CD4-positive, alpha-beta memory T cell (primary cell): ENCODE measurements at regions of chr19 and their contacts with region 1.

Region 1: DNA sequence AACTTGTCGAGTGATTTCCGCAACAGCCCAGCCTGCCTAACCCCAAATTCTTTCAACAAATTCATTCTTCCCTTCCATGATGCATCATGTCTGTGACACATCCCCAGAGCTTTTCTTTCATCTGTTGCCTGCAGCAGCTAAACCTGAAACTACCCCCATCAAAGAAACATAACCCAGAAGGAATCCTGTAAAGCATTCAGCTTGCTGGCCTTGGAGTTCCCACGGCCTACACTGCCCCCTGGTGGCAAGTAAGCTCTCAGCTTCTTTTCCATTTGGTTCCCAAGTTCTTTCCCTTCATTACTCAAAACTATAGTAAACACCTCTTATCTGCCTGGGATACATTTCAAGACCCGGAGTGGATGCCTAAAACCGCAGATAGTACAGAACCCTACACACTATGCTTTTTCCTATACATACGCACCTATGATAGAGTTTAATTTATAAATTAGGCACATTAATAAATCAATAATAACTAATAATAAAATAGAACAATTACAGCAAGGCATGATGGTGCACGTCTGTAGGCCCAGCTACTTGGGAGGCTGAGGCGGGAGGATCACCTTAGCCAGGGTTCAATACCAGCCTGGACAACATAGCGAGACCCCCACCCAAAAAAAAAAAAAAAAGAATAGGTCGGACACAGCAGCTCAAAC is 7.4 kb downstream of the ETHE1 start:
- DNase-seq: peak; percentile 75 to 79 (median 78)
- H3K4me3 ChIP-seq: no peak overlapping the region
- H3K4me3 Mint-ChIP-seq: peak overlapping the region in 3 of 8 donors; percentile 2 to 13 (median 9)
- H3K27ac ChIP-seq: no peak overlapping the region
- H3K27ac Mint-ChIP-seq: peak overlapping the region in 6 of 7 donors; percentile 14 to 82 (median 41)
- H3K4me1 ChIP-seq: peaks cover 11% of the 10 kb centered on the region
- H3K4me1 Mint-ChIP-seq: peaks cover 13 to 14% (median 13%) of the 10 kb centered on the region in 4 donors
- H3K27me3 ChIP-seq: no peaks in the 10 kb centered on the region
- H3K27me3 Mint-ChIP-seq: no peaks in the 10 kb centered on the region

Region 2: DNA sequence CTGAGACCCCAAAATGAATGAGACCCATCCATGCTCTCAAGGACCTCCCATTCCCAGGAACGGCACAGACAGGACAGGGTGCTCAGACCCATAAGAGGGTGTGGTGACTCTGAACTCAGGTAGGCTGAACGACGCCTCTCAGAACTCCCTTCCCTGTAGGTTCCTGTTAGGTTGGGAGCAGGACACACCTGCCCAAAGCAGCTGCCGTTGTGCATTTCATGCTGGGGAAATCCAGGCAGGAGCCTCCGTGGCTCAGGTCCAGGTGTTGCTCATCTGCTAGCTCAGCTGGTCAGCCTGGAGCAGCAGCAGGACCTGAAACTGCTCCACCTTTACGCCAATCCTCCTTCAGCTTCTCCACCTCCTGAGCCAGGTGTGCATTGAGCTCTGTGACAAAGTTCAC is 124.0 kb before region 1 on chr19:
- CTCF ChIA-PET with region 1: no interaction called
- POLR2A ChIA-PET with region 1: no interaction called
- intact Hi-C with region 1: no loop called
- DNase-seq: no peak
- H3K4me3 ChIP-seq: no peak overlapping the region
- H3K4me3 Mint-ChIP-seq: no peak overlapping the region
- H3K27ac ChIP-seq: no peak overlapping the region
- H3K27ac Mint-ChIP-seq: no peak overlapping the region
- H3K4me1 ChIP-seq: no peaks in the 10 kb centered on the region
- H3K4me1 Mint-ChIP-seq: no peaks in the 10 kb centered on the region
- H3K27me3 ChIP-seq: no peaks in the 10 kb centered on the region
- H3K27me3 Mint-ChIP-seq: peaks cover 23 to 39% of the 10 kb centered on the region in 2 donors

Region 3: GRCh38 chr19:43425567-43426392 is 93.8 kb before region 1 on chr19:
- CTCF ChIA-PET with region 1: interaction called, 835 read pairs
- POLR2A ChIA-PET with region 1: no interaction called
- intact Hi-C with region 1: no loop called
- DNase-seq: peak in 1 of 5 donors; percentile 13
- H3K4me3 ChIP-seq: no peak overlapping the region
- H3K4me3 Mint-ChIP-seq: no peak overlapping the region
- H3K27ac ChIP-seq: no peak overlapping the region
- H3K27ac Mint-ChIP-seq: peak overlapping the region in 3 of 7 donors; percentile 17 to 85 (median 52)
- H3K4me1 ChIP-seq: peaks cover 18% of the 10 kb centered on the region
- H3K4me1 Mint-ChIP-seq: peaks cover 5 to 21% (median 10%) of the 10 kb centered on the region in 4 donors
- H3K27me3 ChIP-seq: no peaks in the 10 kb centered on the region
- H3K27me3 Mint-ChIP-seq: peaks cover 0 to 2% of the 10 kb centered on the region in 2 donors

Region 4: DNA sequence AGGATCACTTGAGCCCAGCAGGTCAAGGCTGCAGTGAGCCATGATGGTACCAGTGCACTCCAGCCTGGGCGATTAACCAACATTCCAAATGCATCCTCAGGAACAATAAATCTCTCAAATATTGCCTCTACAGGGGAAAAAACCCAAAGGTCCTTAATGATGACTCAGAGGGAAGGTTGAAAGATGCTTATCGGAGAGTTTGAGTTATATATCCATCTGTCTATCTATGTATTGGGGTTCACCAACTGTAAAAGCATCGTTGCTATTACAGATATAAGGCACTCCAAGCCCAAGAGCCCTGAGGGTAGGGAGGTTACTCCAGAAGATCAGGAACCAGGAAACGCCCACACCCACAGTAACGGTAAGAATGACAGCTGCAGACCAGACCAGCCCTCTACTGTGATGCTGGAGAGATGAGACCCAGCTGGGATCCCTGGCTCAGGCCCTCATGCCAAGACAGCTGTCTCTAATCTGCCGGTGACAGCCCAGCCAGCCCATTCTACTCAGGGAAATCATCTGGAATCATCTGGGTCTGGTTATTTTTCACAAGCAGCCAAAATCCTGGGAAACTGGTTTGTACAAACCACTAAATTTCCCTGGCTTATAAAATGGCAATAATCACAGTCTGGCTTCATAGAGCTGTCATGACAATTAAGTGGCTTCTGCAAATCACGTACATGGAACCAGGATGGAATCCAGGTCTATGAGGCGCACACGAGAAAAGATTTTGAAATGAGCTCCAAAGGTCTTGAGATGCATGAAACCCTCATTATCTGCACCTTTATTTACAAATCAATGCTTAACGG is 81.1 kb before region 1 on chr19:
- CTCF ChIA-PET with region 1: interaction called, 835 read pairs
- POLR2A ChIA-PET with region 1: interaction called, 29 read pairs
- intact Hi-C with region 1: loop called (anchors 1 kb)
- DNase-seq: peak in 2 of 5 donors; percentile 12 to 50
- H3K4me3 ChIP-seq: peak overlapping the region in 1 of 2 donors; percentile 38
- H3K4me3 Mint-ChIP-seq: peak overlapping the region in 6 of 8 donors; percentile 13 to 61 (median 52)
- H3K27ac ChIP-seq: peak overlapping the region; percentile 75
- H3K27ac Mint-ChIP-seq: peak overlapping the region; percentile 95 to 98 (median 96)
- H3K4me1 ChIP-seq: peaks cover 44% of the 10 kb centered on the region
- H3K4me1 Mint-ChIP-seq: peaks cover 35 to 66% (median 47%) of the 10 kb centered on the region in 4 donors
- H3K27me3 ChIP-seq: no peaks in the 10 kb centered on the region
- H3K27me3 Mint-ChIP-seq: no peaks in the 10 kb centered on the region

Region 5: DNA sequence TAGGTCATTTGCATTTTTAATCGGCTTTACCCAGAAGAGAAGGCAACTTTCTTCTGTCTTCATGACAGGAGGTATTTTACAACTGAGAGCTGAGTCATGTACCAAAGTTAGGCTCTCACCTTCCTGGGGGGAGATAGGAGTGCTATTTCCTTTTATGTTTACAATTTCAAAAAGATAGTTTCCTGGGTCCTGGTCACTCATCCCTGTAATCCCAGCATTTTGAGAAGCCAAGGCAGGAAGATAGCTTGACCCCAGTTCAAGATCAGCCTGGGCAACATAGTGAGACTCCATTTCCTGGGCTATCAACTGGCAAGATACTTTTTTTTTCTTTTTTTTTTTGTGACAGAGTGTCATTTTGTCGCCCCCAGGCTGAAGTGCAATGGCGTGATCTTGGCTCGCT is 61.8 kb before region 1 on chr19:
- CTCF ChIA-PET with region 1: interaction called, 21 read pairs
- POLR2A ChIA-PET with region 1: interaction called, 33 read pairs
- intact Hi-C with region 1: no loop called
- DNase-seq: no peak
- H3K4me3 ChIP-seq: no peak overlapping the region
- H3K4me3 Mint-ChIP-seq: no peak overlapping the region
- H3K27ac ChIP-seq: no peak overlapping the region
- H3K27ac Mint-ChIP-seq: no peak overlapping the region
- H3K4me1 ChIP-seq: peaks cover 8% of the 10 kb centered on the region
- H3K4me1 Mint-ChIP-seq: peaks cover 4 to 23% (median 13%) of the 10 kb centered on the region in 4 donors
- H3K27me3 ChIP-seq: no peaks in the 10 kb centered on the region
- H3K27me3 Mint-ChIP-seq: no peaks in the 10 kb centered on the region

Region 6: DNA sequence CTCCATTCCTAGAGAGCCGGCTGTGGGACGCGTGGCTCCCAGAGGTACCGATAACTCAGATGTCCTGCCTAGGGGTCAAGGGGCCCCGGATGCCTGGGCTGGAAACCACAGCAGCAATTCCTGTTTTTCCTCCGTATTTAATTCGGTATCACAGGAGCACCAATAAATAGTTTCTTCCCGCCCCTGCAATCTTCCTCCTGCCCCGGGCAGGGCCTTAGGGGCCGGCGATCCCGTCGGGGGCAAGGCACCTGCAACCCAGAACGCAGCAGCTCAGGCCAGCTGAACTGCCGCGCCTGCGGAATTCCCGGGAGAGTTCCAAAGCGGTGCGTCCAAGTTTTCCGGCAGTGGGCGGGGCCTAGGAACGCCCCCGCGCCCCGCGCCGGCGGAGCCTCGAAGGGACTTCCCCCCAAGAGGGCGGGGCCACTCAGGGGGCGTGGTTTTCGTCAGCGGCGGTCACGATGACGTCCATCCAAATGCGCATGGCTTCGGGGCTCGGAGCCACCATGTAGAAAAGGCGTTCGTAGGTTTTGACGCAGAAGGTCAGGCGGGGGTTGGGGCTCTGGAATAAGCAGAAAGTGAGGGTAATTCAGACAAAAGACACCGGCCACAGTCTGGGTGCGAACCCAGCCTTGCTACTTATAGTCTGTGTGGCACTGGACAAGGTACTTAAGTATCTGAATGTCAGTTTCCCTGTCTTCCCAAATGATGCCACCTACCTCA is 44.4 kb before region 1 on chr19:
- CTCF ChIA-PET with region 1: interaction called, 8 read pairs
- POLR2A ChIA-PET with region 1: no interaction called
- intact Hi-C with region 1: loop called (anchors 1 kb)
- DNase-seq: peak; percentile 94 to 97 (median 95)
- H3K4me3 ChIP-seq: peak overlapping the region; percentile 26 to 53
- H3K4me3 Mint-ChIP-seq: peak overlapping the region; percentile 77 to 90 (median 86)
- H3K27ac ChIP-seq: peak overlapping the region; percentile 58
- H3K27ac Mint-ChIP-seq: peak overlapping the region; percentile 80 to 100 (median 99)
- H3K4me1 ChIP-seq: peaks cover 18% of the 10 kb centered on the region
- H3K4me1 Mint-ChIP-seq: peaks cover 12 to 31% (median 19%) of the 10 kb centered on the region in 4 donors
- H3K27me3 ChIP-seq: no peaks in the 10 kb centered on the region
- H3K27me3 Mint-ChIP-seq: no peaks in the 10 kb centered on the region

Region 7: GRCh38 chr19:43532962-43533545 is 13.5 kb after region 1 on chr19 and contains the start of gene ZNF575:
- CTCF ChIA-PET with region 1: interaction called, 40 read pairs
- POLR2A ChIA-PET with region 1: interaction called, 9 read pairs
- intact Hi-C with region 1: no loop called
- DNase-seq: peak; percentile 82 to 88 (median 84)
- H3K4me3 ChIP-seq: peak within 1 kb of the TSS; percentile 69 to 88
- H3K4me3 Mint-ChIP-seq: peak within 1 kb of the TSS; percentile 91 to 99 (median 98)
- H3K27ac ChIP-seq: peak within 1 kb of the TSS; percentile 53
- H3K27ac Mint-ChIP-seq: peak within 1 kb of the TSS; percentile 95 to 99 (median 98)
- H3K4me1 ChIP-seq: peaks cover 17% of the 10 kb centered on the region
- H3K4me1 Mint-ChIP-seq: peaks cover 10 to 22% (median 15%) of the 10 kb centered on the region in 4 donors
- H3K27me3 ChIP-seq: no peaks in the 10 kb centered on the region
- H3K27me3 Mint-ChIP-seq: no peaks in the 10 kb centered on the region
- total RNA-seq, gene ZNF575: 11.0 to 11.8 TPM

Region 8: GRCh38 chr19:43606569-43607229 is 87.1 kb after region 1 on chr19:
- CTCF ChIA-PET with region 1: no interaction called
- POLR2A ChIA-PET with region 1: no interaction called
- intact Hi-C with region 1: no loop called
- DNase-seq: no peak
- H3K4me3 ChIP-seq: no peak overlapping the region
- H3K4me3 Mint-ChIP-seq: no peak overlapping the region
- H3K27ac ChIP-seq: no peak overlapping the region
- H3K27ac Mint-ChIP-seq: peak overlapping the region in 2 of 7 donors; percentile 5 to 51
- H3K4me1 ChIP-seq: no peaks in the 10 kb centered on the region
- H3K4me1 Mint-ChIP-seq: peaks cover 0 to 10% (median 1%) of the 10 kb centered on the region in 4 donors
- H3K27me3 ChIP-seq: no peaks in the 10 kb centered on the region
- H3K27me3 Mint-ChIP-seq: no peaks in the 10 kb centered on the region

Region 9: GRCh38 chr19:43639519-43640423 is 120.2 kb after region 1 on chr19 and contains the start of gene CADM4:
- CTCF ChIA-PET with region 1: no interaction called
- POLR2A ChIA-PET with region 1: no interaction called
- intact Hi-C with region 1: no loop called
- DNase-seq: peak; percentile 58 to 78 (median 58)
- H3K4me3 ChIP-seq: peak within 1 kb of the TSS in 1 of 2 donors; percentile 74
- H3K4me3 Mint-ChIP-seq: peak within 1 kb of the TSS; percentile 83 to 87 (median 85)
- H3K27ac ChIP-seq: no peak within 1 kb of the TSS
- H3K27ac Mint-ChIP-seq: peak within 1 kb of the TSS; percentile 43 to 89 (median 85)
- H3K4me1 ChIP-seq: peaks cover 10% of the 10 kb centered on the region
- H3K4me1 Mint-ChIP-seq: peaks cover 8 to 17% (median 11%) of the 10 kb centered on the region in 4 donors
- H3K27me3 ChIP-seq: peaks cover 13% of the 10 kb centered on the region
- H3K27me3 Mint-ChIP-seq: peaks cover 16 to 17% of the 10 kb centered on the region in 2 donors
- total RNA-seq, gene CADM4: 0.33 to 0.49 TPM